ENCODE measurements at regions of chr3 and their contacts with region 1.

Region 1: GRCh38 chr3:48989796-48990635 is at the start of gene P4HTM:
- DNase-seq: peak; percentile 88
- H3K4me3 Mint-ChIP-seq: peak within 1 kb of the TSS; percentile 95
- H3K27ac Mint-ChIP-seq: peak within 1 kb of the TSS; percentile 94
- H3K4me1 Mint-ChIP-seq: peaks cover 36% of the 10 kb centered on the region
- H3K27me3 Mint-ChIP-seq: no peaks in the 10 kb centered on the region
- total RNA-seq, gene P4HTM: 32.7 to 32.8 TPM

Region 2: GRCh38 chr3:48966876-48967361 is 23.1 kb before region 1 on chr3:
- CTCF ChIA-PET with region 1: interaction called, 10 read pairs
- POLR2A ChIA-PET with region 1: no interaction called
- intact Hi-C with region 1: no loop called
- DNase-seq: peak; percentile 83
- H3K4me3 Mint-ChIP-seq: no peak overlapping the region
- H3K27ac Mint-ChIP-seq: peak overlapping the region; percentile 82
- H3K4me1 Mint-ChIP-seq: peaks cover 20% of the 10 kb centered on the region
- H3K27me3 Mint-ChIP-seq: no peaks in the 10 kb centered on the region

Region 3: GRCh38 chr3:49007068-49007770 is 17.2 kb after region 1 on chr3 and contains the start of gene WDR6:
- CTCF ChIA-PET with region 1: interaction called, 43 read pairs
- POLR2A ChIA-PET with region 1: interaction called, 46 read pairs
- intact Hi-C with region 1: loop called (anchors 1 kb)
- DNase-seq: peak; percentile 99
- H3K4me3 Mint-ChIP-seq: peak within 1 kb of the TSS; percentile 95
- H3K27ac Mint-ChIP-seq: peak within 1 kb of the TSS; percentile 98
- H3K4me1 Mint-ChIP-seq: peaks cover 21% of the 10 kb centered on the region
- H3K27me3 Mint-ChIP-seq: no peaks in the 10 kb centered on the region
- total RNA-seq, gene WDR6: 139 to 144 TPM

Region 4: GRCh38 chr3:49021813-49022687 is 32.0 kb after region 1 on chr3 and contains the start of gene NDUFAF3:
- CTCF ChIA-PET with region 1: interaction called, 88 read pairs
- POLR2A ChIA-PET with region 1: interaction called, 26 read pairs
- intact Hi-C with region 1: loop called (anchors 2 kb)
- DNase-seq: peak; percentile 96
- H3K4me3 Mint-ChIP-seq: peak within 1 kb of the TSS; percentile 97
- H3K27ac Mint-ChIP-seq: peak within 1 kb of the TSS; percentile 98
- H3K4me1 Mint-ChIP-seq: peaks cover 56% of the 10 kb centered on the region
- H3K27me3 Mint-ChIP-seq: no peaks in the 10 kb centered on the region
- total RNA-seq, gene NDUFAF3: 101 to 106 TPM

Region 5: DNA sequence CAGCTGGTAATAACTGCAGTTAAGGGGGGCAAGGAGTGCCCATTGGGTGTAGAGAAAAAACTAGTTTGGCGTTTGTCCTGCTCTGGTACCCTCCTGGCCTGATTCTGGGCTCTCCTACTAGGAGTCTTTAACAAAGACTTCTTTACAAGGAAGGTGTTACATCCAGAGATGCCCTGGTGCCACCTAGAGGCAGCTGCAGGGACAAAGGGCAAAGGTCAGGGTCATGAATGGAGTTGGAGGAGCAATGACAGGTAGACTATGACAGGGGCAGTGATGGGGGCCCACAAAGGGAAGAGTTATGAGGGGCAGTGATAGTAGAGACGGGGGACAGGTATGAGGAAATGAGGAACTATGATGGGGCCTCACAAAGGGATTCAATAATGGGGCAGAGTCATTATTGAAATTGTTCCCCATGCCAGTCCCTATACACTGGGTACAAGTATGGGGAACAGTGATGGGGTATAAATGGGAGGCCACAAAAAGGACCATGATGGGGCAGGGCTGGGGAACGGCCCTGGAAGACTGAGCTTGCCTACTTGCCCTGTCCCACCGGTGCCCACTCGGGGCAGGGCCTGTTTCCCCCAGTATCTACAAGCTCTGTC is 168.2 kb after region 1 on chr3:
- CTCF ChIA-PET with region 1: interaction called, 22 read pairs
- POLR2A ChIA-PET with region 1: no interaction called
- intact Hi-C with region 1: loop called (anchors 1 kb)
- DNase-seq: peak; percentile 78
- H3K4me3 Mint-ChIP-seq: no peak overlapping the region
- H3K27ac Mint-ChIP-seq: no peak overlapping the region
- H3K4me1 Mint-ChIP-seq: peaks cover 5% of the 10 kb centered on the region
- H3K27me3 Mint-ChIP-seq: no peaks in the 10 kb centered on the region